ENCODE measurements at regions of chr15 and their contacts with region 1.

Region 1: GRCh38 chr15:78408961-78409360 is 29.1 kb upstream of the IREB2 start:
- DNase-seq: no peak
- ATAC-seq: no peak
- H3K4me3 ChIP-seq: no peak overlapping the region
- H3K27ac ChIP-seq: no peak overlapping the region
- H3K4me1 ChIP-seq: no peaks in the 10 kb centered on the region
- H3K27me3 ChIP-seq: no peaks in the 10 kb centered on the region
- CTCF ChIP-seq: no peak

Region 2: DNA sequence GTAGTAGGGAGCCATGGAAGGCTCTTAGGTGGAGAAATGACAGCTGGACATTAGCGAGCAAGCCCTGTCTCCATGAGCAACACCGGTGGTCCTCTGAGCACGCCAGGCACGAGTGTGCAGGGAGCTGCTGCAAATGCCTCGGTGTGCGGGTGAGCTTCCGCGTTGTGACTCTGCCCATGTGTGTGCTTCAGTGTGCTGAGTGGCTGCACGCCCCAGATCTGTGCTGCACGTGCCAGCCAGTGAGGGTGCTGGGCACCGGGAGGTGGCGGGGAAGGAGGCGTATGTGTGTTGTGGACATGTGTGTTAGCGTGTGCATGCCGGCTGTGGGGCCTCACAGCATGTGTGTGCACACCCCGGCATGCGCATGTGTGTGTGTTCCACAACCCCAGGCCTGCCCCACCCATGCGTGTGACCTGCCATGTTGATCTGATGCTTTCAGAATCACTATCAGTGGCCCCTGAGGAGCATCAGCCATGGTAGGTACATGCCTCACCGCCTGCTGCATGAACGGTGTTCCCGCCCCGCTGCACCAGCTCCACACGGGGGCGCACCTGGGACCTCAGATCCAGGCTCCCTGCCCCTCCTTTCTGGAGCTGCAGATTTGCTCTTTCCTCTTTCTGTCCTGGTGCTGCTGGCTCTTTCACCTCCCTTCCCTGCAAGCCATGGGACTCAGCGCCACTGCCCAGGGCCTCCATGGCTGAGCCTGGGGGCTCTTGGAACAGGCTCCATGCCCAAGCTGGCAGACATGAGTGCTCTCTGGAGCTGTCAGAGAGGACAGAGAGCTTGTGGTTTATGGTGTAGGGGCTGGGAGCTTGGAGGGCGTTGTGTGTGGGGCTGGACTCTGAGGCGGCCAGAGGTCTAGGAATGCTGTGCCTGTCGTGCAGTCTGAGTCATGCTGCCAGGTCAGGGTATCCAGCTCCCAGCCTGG is 500.9 kb before region 1 on chr15:
- CTCF ChIA-PET with region 1: interaction called, 14 read pairs
- POLR2A ChIA-PET with region 1: no interaction called
- intact Hi-C with region 1: no loop called
- DNase-seq: peak; percentile 60
- ATAC-seq: peak; percentile 68
- H3K4me3 ChIP-seq: no peak overlapping the region
- H3K27ac ChIP-seq: no peak overlapping the region
- H3K4me1 ChIP-seq: no peaks in the 10 kb centered on the region
- H3K27me3 ChIP-seq: peaks cover 6% of the 10 kb centered on the region; the same call in 1 of the 2 replicates
- CTCF ChIP-seq: peak; percentile 53

Region 3: DNA sequence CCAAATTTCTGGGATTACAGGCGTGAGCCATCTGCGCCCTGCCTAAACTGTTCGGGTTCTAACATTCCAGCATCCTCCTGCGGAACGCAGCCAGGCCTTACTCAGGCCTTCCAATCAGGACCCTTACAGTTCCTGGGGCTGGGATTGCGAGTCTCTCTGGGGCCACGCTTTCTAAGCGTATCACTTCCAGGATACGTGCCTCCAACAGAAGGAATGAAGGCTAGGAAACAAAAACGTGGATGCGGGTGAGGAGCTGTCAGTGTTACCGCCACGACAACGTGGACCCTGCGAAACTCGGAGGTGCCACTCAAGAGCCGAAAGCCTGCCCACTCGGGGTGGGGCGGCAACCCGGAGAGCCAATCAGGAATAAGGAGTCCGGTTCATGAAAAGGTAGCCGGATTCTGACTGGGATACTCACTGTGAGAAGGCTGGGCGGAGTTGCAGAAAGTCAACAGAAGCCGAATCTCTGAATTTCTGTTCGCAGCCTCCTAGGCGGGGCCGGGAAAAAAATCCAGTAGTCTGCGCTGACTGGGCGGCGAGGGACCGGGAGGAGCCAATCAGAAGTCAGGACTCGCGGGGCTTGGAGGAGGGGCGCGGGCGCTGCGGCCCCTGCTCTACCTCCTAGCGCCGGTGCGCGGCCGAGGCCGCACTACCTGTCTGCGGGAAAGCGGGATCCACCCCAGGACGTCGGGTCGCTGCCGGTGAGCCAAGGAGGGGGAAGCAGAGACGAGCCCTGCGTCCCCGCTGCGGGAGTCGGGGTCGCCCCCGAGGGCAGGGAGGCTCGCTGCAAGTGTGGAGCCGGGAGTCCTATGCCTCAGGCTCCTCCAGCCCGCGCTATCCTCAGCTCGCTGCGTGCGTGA is 98.2 kb after region 1 on chr15 and contains the start of gene HYKK:
- CTCF ChIA-PET with region 1: no interaction called
- POLR2A ChIA-PET with region 1: no interaction called
- intact Hi-C with region 1: no loop called
- DNase-seq: peak; percentile 98
- ATAC-seq: peak; percentile 95
- H3K4me3 ChIP-seq: peak within 1 kb of the TSS; percentile 76
- H3K27ac ChIP-seq: peak within 1 kb of the TSS; percentile 16; the same call in 1 of the 2 replicates
- H3K4me1 ChIP-seq: peaks cover 5% of the 10 kb centered on the region; the same call in 1 of the 2 replicates
- H3K27me3 ChIP-seq: no peaks in the 10 kb centered on the region
- CTCF ChIP-seq: no peak
- total RNA-seq, gene HYKK: 2.9 and 7.3 TPM in 2 replicates

Measured in PC-3 (cell line).